MCF 10A (cell line): ENCODE measurements at regions of chr13 and their contacts with region 1.

Region 1: DNA sequence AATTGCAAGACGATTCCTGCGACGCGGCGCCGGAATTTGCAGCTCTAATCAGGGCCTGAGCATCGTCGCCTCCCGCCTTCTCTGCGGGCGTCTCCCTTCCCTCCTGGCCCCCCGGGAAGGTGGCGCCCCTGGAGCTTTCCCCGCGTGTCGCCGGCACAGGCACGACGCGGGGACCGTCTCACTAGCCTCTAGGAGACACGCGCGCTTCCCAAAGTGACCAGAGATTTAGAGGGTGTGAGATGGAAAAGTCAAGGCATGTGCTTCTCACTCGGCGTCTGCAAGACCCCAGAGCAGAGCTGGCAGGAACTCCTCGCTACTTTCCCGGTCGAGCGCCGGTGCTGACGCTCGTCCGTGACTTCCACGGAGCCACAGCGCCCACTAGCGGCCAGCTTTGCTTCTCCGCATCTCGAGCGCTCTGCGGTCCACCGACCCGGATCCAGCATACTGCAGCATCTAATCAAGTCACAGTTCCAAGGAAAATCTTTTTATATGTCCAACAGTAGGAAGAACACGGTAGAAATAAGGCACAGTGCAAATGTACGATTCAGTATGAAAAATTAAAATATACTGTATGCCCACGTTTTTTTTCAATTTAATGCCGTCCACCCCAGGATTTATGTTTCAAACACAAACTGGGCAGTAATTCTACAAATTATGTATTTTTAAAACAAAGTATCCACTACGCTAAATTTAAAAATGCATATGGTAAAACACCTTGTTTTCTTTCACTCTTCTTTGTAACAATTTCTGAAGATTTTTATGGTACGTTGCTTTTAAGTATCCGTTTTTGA is 977 bp upstream of the EFNB2 start:
- DNase-seq: peak; percentile 84
- H3K4me3 Mint-ChIP-seq: peak overlapping the region; percentile 95
- H3K27ac Mint-ChIP-seq: peak overlapping the region; percentile 46
- H3K4me1 Mint-ChIP-seq: no peaks in the 10 kb centered on the region
- H3K27me3 Mint-ChIP-seq: no peaks in the 10 kb centered on the region
- CTCF ChIP-seq: peak; percentile 91

Region 2: GRCh38 chr13:104949840-104950740 is 1586.3 kb before region 1 on chr13:
- CTCF ChIA-PET with region 1: interaction called, 4 read pairs
- POLR2A ChIA-PET with region 1: interaction called, 6 read pairs
- intact Hi-C with region 1: loop called (anchors 5 kb)
- DNase-seq: no peak
- H3K4me3 Mint-ChIP-seq: no peak overlapping the region
- H3K27ac Mint-ChIP-seq: no peak overlapping the region
- H3K4me1 Mint-ChIP-seq: peaks cover 15% of the 10 kb centered on the region
- H3K27me3 Mint-ChIP-seq: no peaks in the 10 kb centered on the region
- CTCF ChIP-seq: no peak

Region 3: GRCh38 chr13:105814219-105814901 is 722.1 kb before region 1 on chr13:
- CTCF ChIA-PET with region 1: no interaction called
- POLR2A ChIA-PET with region 1: interaction called, 19 read pairs
- intact Hi-C with region 1: no loop called
- DNase-seq: peak; percentile 69
- H3K4me3 Mint-ChIP-seq: no peak overlapping the region
- H3K27ac Mint-ChIP-seq: no peak overlapping the region
- H3K4me1 Mint-ChIP-seq: peaks cover 14% of the 10 kb centered on the region
- H3K27me3 Mint-ChIP-seq: no peaks in the 10 kb centered on the region
- CTCF ChIP-seq: no peak

Region 4: DNA sequence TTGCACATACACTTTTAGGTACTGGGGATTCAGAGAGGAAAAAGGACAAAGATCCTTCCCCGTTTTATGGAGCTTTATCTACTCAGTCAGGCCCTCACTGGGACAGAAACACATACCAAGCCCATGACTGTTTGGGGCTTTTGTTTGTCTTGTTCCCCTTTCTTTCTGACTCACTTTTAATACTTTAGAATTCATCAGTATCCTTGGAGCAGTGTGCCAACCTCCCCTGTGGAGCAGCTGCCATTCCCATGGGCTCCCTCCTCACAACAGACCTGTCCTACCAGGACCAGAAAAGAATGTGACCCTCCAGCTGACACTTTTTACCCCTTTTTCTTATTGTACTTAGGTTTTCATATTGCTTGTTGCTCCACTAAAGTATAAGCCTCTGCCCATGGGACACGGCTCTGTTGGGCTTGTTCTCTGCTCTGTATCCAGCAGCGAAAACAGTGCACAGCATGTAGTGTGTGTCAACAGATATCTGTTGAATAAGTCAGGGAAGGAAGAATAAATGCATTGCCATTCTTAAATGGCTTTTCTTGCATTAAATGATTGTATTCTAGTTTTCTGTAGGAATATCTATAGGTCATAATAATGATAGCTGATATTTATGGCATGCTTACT is 432.0 kb before region 1 on chr13:
- CTCF ChIA-PET with region 1: no interaction called
- POLR2A ChIA-PET with region 1: no interaction called
- intact Hi-C with region 1: loop called (anchors 5 kb)
- DNase-seq: peak; percentile 86
- H3K4me3 Mint-ChIP-seq: peak overlapping the region; percentile 67
- H3K27ac Mint-ChIP-seq: peak overlapping the region; percentile 96
- H3K4me1 Mint-ChIP-seq: peaks cover 50% of the 10 kb centered on the region
- H3K27me3 Mint-ChIP-seq: no peaks in the 10 kb centered on the region
- CTCF ChIP-seq: no peak

Region 5: GRCh38 chr13:106507560-106508274 is 28.7 kb before region 1 on chr13:
- CTCF ChIA-PET with region 1: interaction called, 7 read pairs
- POLR2A ChIA-PET with region 1: interaction called, 15 read pairs
- intact Hi-C with region 1: loop called (anchors 1 kb)
- DNase-seq: peak; percentile 98
- H3K4me3 Mint-ChIP-seq: peak overlapping the region; percentile 70
- H3K27ac Mint-ChIP-seq: peak overlapping the region; percentile 89
- H3K4me1 Mint-ChIP-seq: peaks cover 9% of the 10 kb centered on the region
- H3K27me3 Mint-ChIP-seq: no peaks in the 10 kb centered on the region
- CTCF ChIP-seq: no peak

Region 6: GRCh38 chr13:106619688-106620555 is 83.5 kb after region 1 on chr13:
- CTCF ChIA-PET with region 1: interaction called, 7 read pairs
- POLR2A ChIA-PET with region 1: interaction called, 4 read pairs
- intact Hi-C with region 1: loop called (anchors 1 kb)
- DNase-seq: peak; percentile 77
- H3K4me3 Mint-ChIP-seq: peak overlapping the region; percentile 8
- H3K27ac Mint-ChIP-seq: no peak overlapping the region
- H3K4me1 Mint-ChIP-seq: peaks cover 14% of the 10 kb centered on the region
- H3K27me3 Mint-ChIP-seq: peaks cover 31% of the 10 kb centered on the region
- CTCF ChIP-seq: peak; percentile 56